Activated naive CD4-positive, alpha-beta T cell treated with anti-CD3 and anti-CD28 coated beads for 36 hours (primary cell): ENCODE measurements at regions of chr4 and their contacts with region 1.

Region 1: DNA sequence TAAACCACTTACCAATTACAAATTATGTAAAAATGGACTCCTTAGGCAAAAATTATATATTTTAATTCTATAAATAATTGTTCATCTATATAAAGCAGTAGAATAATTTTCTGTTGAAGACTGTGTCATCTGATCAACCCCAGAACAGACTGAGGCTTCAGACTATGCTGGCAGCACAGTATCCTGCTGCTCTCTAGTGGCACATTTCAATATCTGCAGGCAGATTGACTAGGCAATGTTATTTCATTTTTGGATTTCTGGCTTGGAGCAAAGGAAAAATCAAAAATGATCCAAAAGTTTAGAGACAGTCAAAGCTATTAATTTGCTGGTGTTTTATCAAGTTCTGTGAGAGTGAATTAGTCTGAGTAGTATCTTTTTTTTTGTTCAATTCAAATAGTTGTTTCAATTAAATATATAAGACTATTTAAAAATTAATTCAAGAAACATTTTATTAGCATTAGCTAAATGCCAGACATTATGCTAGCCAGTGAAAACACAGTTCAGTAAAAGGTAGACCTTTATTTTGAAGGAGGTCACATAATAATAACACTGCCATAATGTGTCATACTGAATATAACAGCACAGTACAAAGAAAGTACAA is 21.3 kb upstream of the SULT1E1 start:
- DNase-seq: peak; percentile 39
- H3K4me3 Mint-ChIP-seq: no peak overlapping the region
- H3K27ac Mint-ChIP-seq: no peak overlapping the region
- H3K4me1 Mint-ChIP-seq: peaks cover 3% of the 10 kb centered on the region
- H3K27me3 Mint-ChIP-seq: peaks cover 1% of the 10 kb centered on the region

Region 2: GRCh38 chr4:68271851-68272756 is 1609.2 kb before region 1 on chr4:
- CTCF ChIA-PET with region 1: no interaction called
- intact Hi-C with region 1: loop called (anchors 10 kb)
- DNase-seq: no peak
- H3K4me3 Mint-ChIP-seq: peak overlapping the region; percentile 30
- H3K27ac Mint-ChIP-seq: no peak overlapping the region
- H3K4me1 Mint-ChIP-seq: peaks cover 8% of the 10 kb centered on the region
- H3K27me3 Mint-ChIP-seq: peaks cover 6% of the 10 kb centered on the region

Region 3: GRCh38 chr4:69470561-69470960 is 410.7 kb before region 1 on chr4:
- CTCF ChIA-PET with region 1: no interaction called
- intact Hi-C with region 1: no loop called
- DNase-seq: no peak
- H3K4me3 Mint-ChIP-seq: no peak overlapping the region
- H3K27ac Mint-ChIP-seq: no peak overlapping the region
- H3K4me1 Mint-ChIP-seq: no peaks in the 10 kb centered on the region
- H3K27me3 Mint-ChIP-seq: no peaks in the 10 kb centered on the region

Region 4: GRCh38 chr4:69689599-69689998 is 191.7 kb before region 1 on chr4:
- CTCF ChIA-PET with region 1: interaction called, 24 read pairs
- intact Hi-C with region 1: loop called (anchors 1 kb)
- DNase-seq: no peak
- H3K4me3 Mint-ChIP-seq: no peak overlapping the region
- H3K27ac Mint-ChIP-seq: no peak overlapping the region
- H3K4me1 Mint-ChIP-seq: peaks cover 3% of the 10 kb centered on the region
- H3K27me3 Mint-ChIP-seq: no peaks in the 10 kb centered on the region

Region 5: DNA sequence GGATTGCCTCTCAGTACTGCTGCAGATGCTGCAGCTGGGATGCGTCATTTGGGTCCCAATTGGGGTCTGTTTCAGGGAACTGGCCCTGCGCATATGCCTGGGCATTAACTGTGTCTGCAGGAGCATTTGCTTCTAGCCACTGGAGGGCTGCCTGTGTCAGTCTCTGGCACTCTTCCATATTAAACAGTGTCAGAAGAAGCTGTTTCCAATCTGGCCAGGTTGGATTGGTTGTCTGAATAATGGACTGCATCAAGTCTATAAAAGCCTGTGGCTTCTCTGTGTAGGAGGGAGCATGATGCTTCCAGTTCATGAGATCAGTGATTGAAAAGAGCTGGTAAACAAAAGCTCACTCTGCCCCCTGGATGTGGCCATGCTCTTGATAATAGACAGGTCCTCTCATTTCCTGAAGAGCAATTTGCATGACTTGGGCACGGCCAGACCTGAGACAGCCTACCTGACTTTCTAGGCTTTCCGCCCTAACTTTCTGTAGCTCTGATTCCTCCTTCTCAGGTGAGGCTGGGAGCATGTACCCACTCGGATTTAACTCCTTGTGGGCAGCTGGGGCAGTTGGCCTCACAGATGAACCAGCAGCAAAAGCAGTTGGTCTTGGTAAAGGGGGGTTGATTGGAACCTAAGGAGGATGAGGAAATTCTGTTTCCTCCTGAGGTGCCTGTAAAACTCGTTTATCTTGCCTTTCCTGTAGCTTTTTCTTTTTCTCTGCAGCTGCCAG is 50.5 kb before region 1 on chr4:
- CTCF ChIA-PET with region 1: interaction called, 5 read pairs
- intact Hi-C with region 1: loop called (anchors 2 kb)
- DNase-seq: peak; percentile 25
- H3K4me3 Mint-ChIP-seq: no peak overlapping the region
- H3K27ac Mint-ChIP-seq: no peak overlapping the region
- H3K4me1 Mint-ChIP-seq: peaks cover 7% of the 10 kb centered on the region
- H3K27me3 Mint-ChIP-seq: no peaks in the 10 kb centered on the region

Region 6: DNA sequence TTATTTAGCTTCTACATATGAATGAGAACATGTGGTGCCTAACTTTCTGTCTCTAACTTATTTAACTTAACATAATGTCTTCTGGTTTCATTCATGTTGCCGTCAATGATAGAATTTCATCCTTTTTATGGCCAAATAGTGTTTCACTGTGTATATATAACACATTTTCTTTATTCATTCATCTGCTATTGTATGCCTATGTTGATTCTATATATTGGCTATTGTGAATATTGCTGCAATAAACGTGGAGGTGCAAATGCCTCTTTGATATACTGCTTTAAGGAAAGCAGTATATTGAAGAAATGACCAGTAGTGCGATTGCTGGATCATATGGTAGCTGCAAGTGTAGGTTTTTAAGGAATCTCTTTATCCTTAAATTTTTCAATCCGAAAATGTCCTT is 39.6 kb after region 1 on chr4:
- CTCF ChIA-PET with region 1: no interaction called
- intact Hi-C with region 1: no loop called
- DNase-seq: no peak
- H3K4me3 Mint-ChIP-seq: no peak overlapping the region
- H3K27ac Mint-ChIP-seq: no peak overlapping the region
- H3K4me1 Mint-ChIP-seq: no peaks in the 10 kb centered on the region
- H3K27me3 Mint-ChIP-seq: peaks cover 4% of the 10 kb centered on the region

Region 7: GRCh38 chr4:70463335-70463734 is 582.1 kb after region 1 on chr4:
- CTCF ChIA-PET with region 1: no interaction called
- intact Hi-C with region 1: no loop called
- DNase-seq: no peak
- H3K4me3 Mint-ChIP-seq: no peak overlapping the region
- H3K27ac Mint-ChIP-seq: no peak overlapping the region
- H3K4me1 Mint-ChIP-seq: no peaks in the 10 kb centered on the region
- H3K27me3 Mint-ChIP-seq: peaks cover 6% of the 10 kb centered on the region

Region 8: DNA sequence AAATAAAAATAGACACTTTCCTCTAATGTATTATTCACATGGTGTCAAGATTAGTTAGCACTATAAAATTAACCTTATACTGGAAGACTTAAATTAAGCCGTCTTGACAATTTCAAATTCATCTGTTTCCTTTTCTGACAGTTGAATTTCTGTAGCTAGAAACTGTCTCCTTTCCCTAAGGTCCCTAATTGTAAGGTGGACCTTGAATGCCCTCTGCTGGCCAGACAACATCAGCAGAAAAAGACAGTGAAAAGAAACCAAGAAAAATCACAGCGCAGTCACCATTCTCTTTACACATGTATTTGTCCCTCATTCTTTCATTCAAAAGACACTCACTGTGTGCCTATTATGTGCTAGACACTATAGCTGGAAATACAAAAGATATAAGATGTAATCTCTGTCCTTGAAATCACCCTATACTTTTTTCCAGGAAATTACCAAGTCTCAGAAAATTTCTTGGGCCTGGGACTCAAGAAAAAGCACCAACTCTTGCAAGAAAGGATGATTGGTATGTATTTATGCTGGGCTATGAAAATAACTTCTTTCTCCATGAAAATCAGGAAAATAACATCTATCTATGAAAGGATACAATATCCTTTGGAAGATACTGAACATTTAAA is 678.0 kb after region 1 on chr4:
- CTCF ChIA-PET with region 1: interaction called, 3 read pairs
- intact Hi-C with region 1: loop called (anchors 5 kb)
- DNase-seq: peak; percentile 73
- H3K4me3 Mint-ChIP-seq: no peak overlapping the region
- H3K27ac Mint-ChIP-seq: no peak overlapping the region
- H3K4me1 Mint-ChIP-seq: peaks cover 9% of the 10 kb centered on the region
- H3K27me3 Mint-ChIP-seq: no peaks in the 10 kb centered on the region